IMR-90 (cell line): ENCODE measurements at regions of chrX and their contacts with region 1.

Region 1: DNA sequence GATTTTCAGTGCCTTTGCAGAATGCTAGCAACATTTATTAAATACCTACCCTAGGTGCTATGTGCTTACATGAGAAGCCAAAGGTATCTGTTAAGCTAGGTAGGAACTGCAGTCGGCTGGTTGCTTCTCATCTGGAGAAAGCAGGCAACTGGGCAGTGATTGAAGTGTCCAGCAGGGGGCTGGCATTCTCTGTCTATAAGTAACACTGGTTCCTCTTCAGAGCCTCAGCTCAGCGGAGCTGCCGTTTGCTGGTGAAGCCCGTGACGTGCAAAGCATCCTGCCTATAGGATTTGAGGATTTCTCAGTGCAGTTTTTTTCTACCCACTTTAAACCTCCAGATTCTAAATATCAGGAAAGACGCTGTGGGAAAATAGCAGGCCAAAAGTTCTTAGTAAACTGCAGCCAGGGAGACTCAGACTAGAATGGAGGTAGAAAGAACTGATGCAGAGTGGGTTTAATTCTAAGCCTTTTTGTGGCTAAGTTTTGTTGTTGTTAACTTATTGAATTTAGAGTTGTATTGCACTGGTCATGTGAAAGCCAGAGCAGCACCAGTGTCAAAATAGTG is at the start of gene GRPR:
- DNase-seq: peak; percentile 92
- ATAC-seq: peak; percentile 100
- H3K4me3 ChIP-seq: no peak within 1 kb of the TSS; the same call in 1 of the 2 replicates
- H3K27ac ChIP-seq: no peak within 1 kb of the TSS
- H3K4me1 ChIP-seq: peaks cover 2% of the 10 kb centered on the region; the same call in 1 of the 2 replicates
- H3K27me3 ChIP-seq: no peaks in the 10 kb centered on the region; the same call in 1 of the 2 replicates
- CTCF ChIP-seq: peak; percentile 80
- POLR2A ChIP-seq: no peak
- RAD21 ChIP-seq: peak; percentile 83
- total RNA-seq, gene GRPR: 13.6 and 16.4 TPM in 2 replicates

Region 2: GRCh38 chrX:15310117-15310516 is 813.2 kb before region 1 on chrX:
- CTCF ChIA-PET with region 1: no interaction called
- POLR2A ChIA-PET with region 1: no interaction called
- dilution Hi-C with region 1: no loop called
- in situ Hi-C with region 1: no loop called
- intact Hi-C with region 1: no loop called
- DNase-seq: peak; percentile 6
- ATAC-seq: no peak
- H3K4me3 ChIP-seq: no peak overlapping the region
- H3K27ac ChIP-seq: no peak overlapping the region
- H3K4me1 ChIP-seq: no peaks in the 10 kb centered on the region
- H3K27me3 ChIP-seq: peaks cover 1% of the 10 kb centered on the region; the same call in 1 of the 2 replicates
- CTCF ChIP-seq: no peak
- POLR2A ChIP-seq: no peak
- RAD21 ChIP-seq: no peak

Region 3: DNA sequence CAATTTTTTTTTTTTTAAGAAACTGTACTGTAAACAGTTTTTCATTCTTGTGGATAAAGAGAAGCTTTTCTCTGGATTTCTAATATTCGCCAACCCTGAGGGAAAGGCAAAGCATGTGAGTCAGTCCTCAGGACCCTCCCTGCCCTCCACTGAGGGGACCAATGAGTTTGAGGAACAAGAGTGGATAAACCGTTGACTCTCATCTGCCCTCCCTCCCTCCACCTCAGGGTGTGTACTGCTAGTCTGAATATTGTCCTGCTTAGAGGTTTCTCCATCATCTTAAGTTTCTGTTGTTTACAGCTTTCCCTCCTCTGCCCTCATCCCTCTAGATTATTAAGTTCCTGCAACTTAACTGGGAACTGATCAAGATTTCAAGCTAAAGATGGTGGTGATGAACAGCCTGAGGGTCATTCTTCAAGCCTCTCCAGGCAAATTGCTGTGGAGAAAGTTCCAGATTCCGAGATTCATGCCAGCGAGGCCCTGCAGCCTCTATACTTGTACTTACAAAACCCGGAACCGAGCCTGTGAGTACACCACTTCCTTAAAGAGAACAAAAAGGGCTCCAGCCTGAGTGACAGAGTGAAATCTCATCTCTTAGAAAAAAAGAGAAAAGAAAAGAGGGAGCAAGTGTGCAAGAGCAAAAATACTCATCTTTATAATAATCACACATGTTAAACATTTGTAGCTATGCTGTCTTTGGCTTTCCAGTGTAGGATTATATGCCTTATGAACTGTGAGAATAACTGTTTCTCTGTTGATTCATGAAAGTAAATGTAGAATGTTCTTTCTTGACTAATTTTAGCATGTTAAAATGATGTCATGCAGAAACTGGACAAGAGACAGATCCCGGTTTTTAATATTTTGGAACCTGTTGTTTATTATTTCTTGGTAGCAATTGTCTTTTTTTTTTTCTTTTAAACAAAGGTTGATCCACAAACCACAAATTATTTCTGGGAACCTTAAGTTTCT is 373.4 kb before region 1 on chrX:
- CTCF ChIA-PET with region 1: interaction called, 10 read pairs
- POLR2A ChIA-PET with region 1: no interaction called
- dilution Hi-C with region 1: no loop called
- in situ Hi-C with region 1: no loop called
- intact Hi-C with region 1: no loop called
- DNase-seq: peak; percentile 6
- ATAC-seq: peak; percentile 31
- H3K4me3 ChIP-seq: no peak overlapping the region
- H3K27ac ChIP-seq: no peak overlapping the region
- H3K4me1 ChIP-seq: peaks cover 13% of the 10 kb centered on the region
- H3K27me3 ChIP-seq: no peaks in the 10 kb centered on the region
- CTCF ChIP-seq: no peak
- POLR2A ChIP-seq: no peak
- RAD21 ChIP-seq: no peak

Region 4: GRCh38 chrX:15930585-15930984 is 192.7 kb before region 1 on chrX:
- CTCF ChIA-PET with region 1: interaction called, 6 read pairs
- POLR2A ChIA-PET with region 1: no interaction called
- dilution Hi-C with region 1: no loop called
- in situ Hi-C with region 1: no loop called
- intact Hi-C with region 1: loop called (anchors 5 kb)
- DNase-seq: peak; percentile 66
- ATAC-seq: peak; percentile 60
- H3K4me3 ChIP-seq: no peak overlapping the region
- H3K27ac ChIP-seq: no peak overlapping the region
- H3K4me1 ChIP-seq: no peaks in the 10 kb centered on the region; the same call in 1 of the 2 replicates
- H3K27me3 ChIP-seq: peaks cover 4% of the 10 kb centered on the region; the same call in 1 of the 2 replicates
- CTCF ChIP-seq: peak; percentile 42
- POLR2A ChIP-seq: no peak
- RAD21 ChIP-seq: peak; percentile 61

Region 5: DNA sequence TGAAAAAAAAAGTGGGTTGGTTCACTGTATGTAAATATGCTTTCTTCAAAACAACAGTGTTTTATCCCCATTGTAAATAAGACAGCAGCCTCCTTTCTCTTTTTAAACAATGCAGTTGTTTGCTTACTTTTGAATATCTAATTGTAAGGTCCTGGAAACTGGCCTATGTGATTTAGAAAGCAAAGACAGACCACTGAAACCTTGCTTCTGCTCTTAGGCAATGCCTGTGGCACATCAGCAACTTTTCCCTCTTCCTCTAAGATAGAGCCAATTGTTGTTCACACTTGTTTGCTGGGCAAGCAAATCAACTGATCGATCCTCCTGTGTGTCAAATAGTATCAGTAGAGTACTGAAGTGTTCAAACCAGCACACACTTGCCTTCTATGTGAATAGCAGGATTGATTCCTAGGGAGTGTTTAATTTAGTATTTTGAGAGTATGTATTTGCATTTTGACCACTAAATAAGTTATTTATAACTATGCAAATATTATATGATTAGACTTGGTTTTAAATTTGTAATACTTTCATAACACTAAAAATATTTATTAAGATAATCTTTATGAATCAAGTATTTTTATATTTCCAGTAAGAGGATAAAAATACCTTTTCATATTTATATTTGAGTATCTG is 55.3 kb before region 1 on chrX:
- CTCF ChIA-PET with region 1: no interaction called
- POLR2A ChIA-PET with region 1: no interaction called
- dilution Hi-C with region 1: no loop called
- in situ Hi-C with region 1: no loop called
- intact Hi-C with region 1: no loop called
- DNase-seq: no peak
- ATAC-seq: no peak
- H3K4me3 ChIP-seq: no peak overlapping the region
- H3K27ac ChIP-seq: no peak overlapping the region
- H3K4me1 ChIP-seq: no peaks in the 10 kb centered on the region
- H3K27me3 ChIP-seq: no peaks in the 10 kb centered on the region
- CTCF ChIP-seq: no peak
- POLR2A ChIP-seq: no peak
- RAD21 ChIP-seq: no peak

Region 6: GRCh38 chrX:16305187-16305586 is 181.9 kb after region 1 on chrX:
- CTCF ChIA-PET with region 1: no interaction called
- POLR2A ChIA-PET with region 1: no interaction called
- dilution Hi-C with region 1: no loop called
- in situ Hi-C with region 1: no loop called
- intact Hi-C with region 1: loop called (anchors 10 kb)
- DNase-seq: no peak
- ATAC-seq: no peak
- H3K4me3 ChIP-seq: no peak overlapping the region
- H3K27ac ChIP-seq: no peak overlapping the region
- H3K4me1 ChIP-seq: no peaks in the 10 kb centered on the region
- H3K27me3 ChIP-seq: 0 out of 2 replicates have a peak, but pooled peaks cover 1% of the 10 kb centered on the region
- CTCF ChIP-seq: no peak
- POLR2A ChIP-seq: no peak
- RAD21 ChIP-seq: no peak

Region 7: GRCh38 chrX:16445166-16445752 is 322.0 kb after region 1 on chrX:
- CTCF ChIA-PET with region 1: interaction called, 7 read pairs
- POLR2A ChIA-PET with region 1: no interaction called
- dilution Hi-C with region 1: no loop called
- in situ Hi-C with region 1: no loop called
- intact Hi-C with region 1: loop called (anchors 1 kb)
- DNase-seq: peak; percentile 47
- ATAC-seq: peak; percentile 75
- H3K4me3 ChIP-seq: no peak overlapping the region
- H3K27ac ChIP-seq: no peak overlapping the region
- H3K4me1 ChIP-seq: no peaks in the 10 kb centered on the region; the same call in 1 of the 2 replicates
- H3K27me3 ChIP-seq: no peaks in the 10 kb centered on the region
- CTCF ChIP-seq: peak; percentile 60
- POLR2A ChIP-seq: no peak
- RAD21 ChIP-seq: peak; percentile 55

Region 8: DNA sequence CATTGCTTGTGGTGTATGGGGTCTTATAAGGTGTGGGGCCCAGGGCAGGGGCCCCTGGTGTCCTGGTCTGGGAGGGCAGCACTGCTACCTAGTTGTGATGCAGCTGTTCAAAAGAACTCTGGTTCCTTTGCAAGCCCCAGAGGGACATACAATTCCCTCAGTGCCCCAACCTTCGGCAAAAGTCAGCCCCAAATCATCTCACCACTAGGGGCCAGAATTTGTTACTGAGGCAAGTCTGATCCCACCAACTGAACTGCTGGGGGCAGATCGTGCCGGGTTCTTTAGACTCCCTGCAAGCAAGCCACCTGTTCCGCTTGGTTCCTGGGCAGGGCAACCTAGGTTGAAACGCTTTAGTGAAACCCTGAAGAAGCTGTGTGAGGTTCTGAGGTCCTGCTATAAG is 346.6 kb after region 1 on chrX:
- CTCF ChIA-PET with region 1: no interaction called
- POLR2A ChIA-PET with region 1: no interaction called
- dilution Hi-C with region 1: no loop called
- in situ Hi-C with region 1: no loop called
- intact Hi-C with region 1: no loop called
- DNase-seq: no peak
- ATAC-seq: no peak
- H3K4me3 ChIP-seq: no peak overlapping the region
- H3K27ac ChIP-seq: no peak overlapping the region
- H3K4me1 ChIP-seq: peaks cover 2% of the 10 kb centered on the region; the same call in 1 of the 2 replicates
- H3K27me3 ChIP-seq: peaks cover 2% of the 10 kb centered on the region; the same call in 1 of the 2 replicates
- CTCF ChIP-seq: no peak
- POLR2A ChIP-seq: no peak
- RAD21 ChIP-seq: no peak

Region 9: DNA sequence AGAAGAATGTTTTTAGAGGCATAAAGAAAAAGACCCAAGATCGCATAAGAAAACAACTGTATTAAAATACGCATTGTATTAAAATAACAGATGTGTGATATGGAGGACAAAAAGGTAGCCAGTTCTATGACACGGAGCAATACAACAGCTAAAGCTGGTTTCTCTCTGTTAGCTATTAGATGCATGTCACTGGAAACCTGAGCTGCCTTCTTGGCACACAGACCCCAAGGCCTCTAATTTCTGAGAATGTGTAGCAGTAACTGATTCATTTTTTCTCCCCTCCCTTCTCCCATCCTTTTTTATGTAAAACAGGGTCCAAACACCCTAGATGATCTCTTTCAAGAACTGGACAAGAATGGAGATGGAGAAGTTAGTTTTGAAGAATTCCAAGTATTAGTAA is 530.8 kb after region 1 on chrX:
- CTCF ChIA-PET with region 1: no interaction called
- POLR2A ChIA-PET with region 1: no interaction called
- dilution Hi-C with region 1: no loop called
- in situ Hi-C with region 1: no loop called
- intact Hi-C with region 1: no loop called
- DNase-seq: peak; percentile 41
- ATAC-seq: no peak
- H3K4me3 ChIP-seq: no peak overlapping the region
- H3K27ac ChIP-seq: no peak overlapping the region
- H3K4me1 ChIP-seq: peaks cover 12% of the 10 kb centered on the region
- H3K27me3 ChIP-seq: peaks cover 3% of the 10 kb centered on the region; the same call in 1 of the 2 replicates
- CTCF ChIP-seq: no peak
- POLR2A ChIP-seq: no peak
- RAD21 ChIP-seq: no peak

Region 10: GRCh38 chrX:16695079-16695676 is 571.9 kb after region 1 on chrX:
- CTCF ChIA-PET with region 1: no interaction called
- POLR2A ChIA-PET with region 1: no interaction called
- dilution Hi-C with region 1: no loop called
- in situ Hi-C with region 1: no loop called
- intact Hi-C with region 1: loop called (anchors 1 kb)
- DNase-seq: peak; percentile 65
- ATAC-seq: peak; percentile 98
- H3K4me3 ChIP-seq: no peak overlapping the region
- H3K27ac ChIP-seq: no peak overlapping the region
- H3K4me1 ChIP-seq: no peaks in the 10 kb centered on the region
- H3K27me3 ChIP-seq: no peaks in the 10 kb centered on the region
- CTCF ChIP-seq: peak; percentile 82
- POLR2A ChIP-seq: no peak
- RAD21 ChIP-seq: peak; percentile 78